ENCODE measurements at regions of chr2 and their contacts with region 1.

Region 1: GRCh38 chr2:134118279-134119116 is 135.4 kb upstream of the MGAT5 start:
- DNase-seq: peak; percentile 88 to 94
- H3K4me3 ChIP-seq: no peak overlapping the region
- H3K27ac ChIP-seq: peak overlapping the region; percentile 2 to 97 (median 94)
- H3K4me1 ChIP-seq: peaks cover 22 to 43% (median 38%) of the 10 kb centered on the region in 4 donors
- H3K27me3 ChIP-seq: no peaks in the 10 kb centered on the region
- CTCF ChIP-seq: peak in 5 of 7 experiments; percentile 52 to 85 (median 68)
- EP300 ChIP-seq: no peak
- POLR2A ChIP-seq: no peak

Region 2: GRCh38 chr2:134245340-134245984 is 127.0 kb after region 1 on chr2:
- intact Hi-C with region 1: loop called (anchors 10 kb)
- DNase-seq: peak; percentile 84 to 86
- H3K4me3 ChIP-seq: no peak overlapping the region
- H3K27ac ChIP-seq: peak overlapping the region in 4 of 5 donors; percentile 18 to 83 (median 48)
- H3K4me1 ChIP-seq: peaks cover 16 to 69% (median 45%) of the 10 kb centered on the region in 4 donors
- H3K27me3 ChIP-seq: no peaks in the 10 kb centered on the region
- CTCF ChIP-seq: peak in 5 of 7 experiments; percentile 53 to 76 (median 69)
- EP300 ChIP-seq: no peak
- POLR2A ChIP-seq: no peak

Region 3: GRCh38 chr2:134411828-134412638 is 293.5 kb after region 1 on chr2:
- intact Hi-C with region 1: loop called (anchors 5 kb)
- DNase-seq: peak; percentile 67 to 94
- H3K4me3 ChIP-seq: no peak overlapping the region
- H3K27ac ChIP-seq: peak overlapping the region in 4 of 5 donors; percentile 5 to 59 (median 50)
- H3K4me1 ChIP-seq: peaks cover 11 to 62% (median 31%) of the 10 kb centered on the region in 4 donors
- H3K27me3 ChIP-seq: no peaks in the 10 kb centered on the region
- CTCF ChIP-seq: peak in 5 of 7 experiments; percentile 45 to 75 (median 62)
- EP300 ChIP-seq: no peak
- POLR2A ChIP-seq: no peak

Region 4: DNA sequence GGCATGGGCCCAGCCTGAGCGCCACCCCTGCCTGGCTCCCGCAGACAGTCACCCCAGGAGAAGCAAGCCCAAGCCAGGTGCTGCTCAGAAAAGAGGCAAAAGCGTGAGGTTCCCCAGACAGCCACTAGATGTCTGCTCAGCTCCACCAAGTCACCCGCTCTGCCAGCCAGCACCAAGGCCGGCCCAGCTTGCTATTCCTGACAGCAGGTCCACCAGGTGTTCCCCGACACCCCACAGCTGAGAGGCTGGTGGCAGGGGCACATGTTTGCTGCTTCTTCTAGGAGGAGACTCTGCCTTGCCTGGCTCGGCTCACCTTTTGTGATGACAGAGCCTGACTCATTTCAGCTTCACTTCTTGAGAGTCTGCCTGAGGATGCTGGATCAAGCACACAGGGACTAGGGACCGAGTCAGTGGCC is 342.1 kb after region 1 on chr2:
- intact Hi-C with region 1: loop called (anchors 10 kb)
- DNase-seq: peak; percentile 78 to 90
- H3K4me3 ChIP-seq: no peak overlapping the region
- H3K27ac ChIP-seq: no peak overlapping the region
- H3K4me1 ChIP-seq: peaks cover 7 to 19% (median 10%) of the 10 kb centered on the region in 4 donors
- H3K27me3 ChIP-seq: peaks cover 0 to 4% (median 0%) of the 10 kb centered on the region in 3 donors
- CTCF ChIP-seq: peak in 6 of 7 experiments; percentile 36 to 83 (median 62)
- EP300 ChIP-seq: no peak
- POLR2A ChIP-seq: no peak